HepG2 (cell line): ENCODE measurements at regions of chr2 and their contacts with region 1.

Region 1: DNA sequence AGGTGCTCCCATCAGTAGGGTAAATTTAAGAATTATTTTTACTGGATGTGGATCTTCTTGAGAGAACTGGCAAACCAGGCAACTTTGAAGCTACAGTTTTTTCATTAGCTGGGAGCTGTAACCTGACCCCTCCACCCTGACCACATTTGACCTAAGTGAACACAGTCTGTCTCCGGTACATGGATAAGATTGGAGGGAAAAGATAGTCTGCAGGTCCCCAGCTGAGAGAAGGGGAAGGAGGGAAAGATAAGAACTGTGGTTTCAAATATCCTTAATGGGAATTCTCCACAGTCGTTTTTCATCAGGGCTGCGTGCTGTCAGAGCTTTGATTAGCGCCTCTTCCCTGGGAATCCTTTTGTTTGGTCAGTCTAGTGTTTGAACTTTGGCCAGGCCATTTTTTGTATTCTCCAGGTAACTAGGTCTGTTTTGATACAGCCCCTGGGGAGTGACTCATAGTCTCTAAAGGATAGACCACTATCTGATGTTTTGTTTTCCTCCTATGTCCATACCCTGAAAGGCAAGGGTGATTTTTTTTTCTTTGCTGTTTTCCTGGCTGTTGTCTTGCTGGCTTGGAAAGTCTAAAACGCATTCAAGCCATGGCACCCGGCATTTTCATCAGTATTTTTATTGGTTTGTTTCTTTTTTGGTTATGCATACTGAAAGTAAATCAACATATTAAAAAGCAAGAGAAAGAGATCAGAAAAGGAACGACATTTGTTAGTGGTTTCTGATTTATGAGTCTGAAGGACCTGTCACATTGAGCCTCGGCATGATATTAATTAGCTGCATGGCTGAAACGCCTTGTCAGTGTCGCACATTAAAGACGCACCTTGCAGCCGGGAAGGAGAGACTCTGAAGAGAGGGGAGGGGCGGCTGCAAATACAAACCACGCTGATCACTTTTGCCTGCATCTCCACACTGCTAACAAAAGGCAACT is 183.4 kb upstream of the FN1 start:
- DNase-seq: peak; percentile 100
- ATAC-seq: peak; percentile 89
- H3K4me3 ChIP-seq: peak overlapping the region in 1 of 3 experiments; percentile 4; a peak in 1 of 6 replicates
- H3K27ac ChIP-seq: peak overlapping the region; percentile 90
- H3K4me1 ChIP-seq: peaks cover 91% of the 10 kb centered on the region
- H3K27me3 ChIP-seq: no peaks in the 10 kb centered on the region
- CTCF ChIP-seq: no peak
- EP300 ChIP-seq: peak; percentile 89 to 99
- POLR2A ChIP-seq: peak; percentile 19 to 61; a peak in 3 of 4 replicates
- RAD21 ChIP-seq: peak; percentile 24; the same call in 1 of the 2 replicates

Region 2: GRCh38 chr2:215418064-215418963 is 201.0 kb before region 1 on chr2:
- CTCF ChIA-PET with region 1: no interaction called
- POLR2A ChIA-PET with region 1: interaction called, 4 read pairs
- in situ Hi-C with region 1: no loop called
- intact Hi-C with region 1: loop called (anchors 5 kb)
- DNase-seq: peak; percentile 89
- ATAC-seq: peak; percentile 42
- H3K4me3 ChIP-seq: peak overlapping the region; percentile 3 to 31 (median 13); a peak in 2 of 6 replicates
- H3K27ac ChIP-seq: peak overlapping the region; percentile 77
- H3K4me1 ChIP-seq: peaks cover 100% of the 10 kb centered on the region
- H3K27me3 ChIP-seq: no peaks in the 10 kb centered on the region
- CTCF ChIP-seq: no peak
- EP300 ChIP-seq: peak; percentile 45 to 94; a peak in 3 of 4 replicates
- POLR2A ChIP-seq: peak in 1 of 2 experiments; percentile 28; a peak in 1 of 4 replicates
- RAD21 ChIP-seq: no peak

Region 3: DNA sequence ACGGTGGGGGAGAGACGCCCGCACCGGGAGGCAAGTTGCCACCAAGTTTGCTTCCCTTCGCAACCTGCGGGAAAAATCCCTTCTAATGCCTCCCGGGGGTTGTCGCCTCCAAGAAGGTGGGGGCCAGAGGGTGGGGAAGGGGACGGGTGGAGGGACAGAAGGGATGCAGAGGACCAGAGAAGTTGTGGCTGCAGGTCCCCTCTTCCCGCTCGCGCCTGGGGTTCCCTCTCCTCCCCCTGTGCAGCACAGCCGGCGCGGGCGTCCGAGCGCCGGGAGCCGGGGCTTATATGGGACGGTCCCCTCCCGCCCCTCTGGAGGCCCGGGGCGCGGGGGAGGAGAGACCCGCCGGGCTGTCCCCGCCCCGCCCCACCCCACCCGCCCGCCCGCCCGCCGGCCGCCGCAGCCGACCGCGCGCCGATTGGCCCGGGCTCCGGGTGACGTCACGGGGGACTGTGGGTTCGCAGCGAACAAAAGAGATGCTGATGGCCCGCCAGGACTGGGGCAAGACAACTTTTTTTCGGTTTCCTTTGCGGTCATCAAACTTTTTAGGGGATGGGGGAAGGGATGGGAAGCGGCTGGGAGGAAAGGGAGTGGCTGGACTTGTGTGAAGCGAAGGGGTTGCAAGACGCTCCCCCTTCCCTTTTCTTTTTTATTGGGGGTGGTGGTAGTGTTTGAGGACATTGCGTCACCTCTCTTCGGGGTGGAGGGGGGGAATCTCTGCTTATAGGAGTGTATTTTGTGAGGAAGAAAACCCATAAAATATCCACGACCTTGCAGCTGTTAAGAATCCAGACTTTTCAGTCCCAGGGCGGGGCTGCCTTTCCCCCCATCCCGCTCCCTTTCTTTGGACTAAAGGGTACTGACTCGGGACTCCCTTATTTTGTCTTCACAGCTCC is 183.2 kb before region 1 on chr2 and contains the start of gene FN1:
- CTCF ChIA-PET with region 1: no interaction called
- POLR2A ChIA-PET with region 1: interaction called, 4 read pairs
- in situ Hi-C with region 1: loop called (anchors 5 kb)
- intact Hi-C with region 1: loop called (anchors 2 kb)
- DNase-seq: peak; percentile 91
- ATAC-seq: peak; percentile 92
- H3K4me3 ChIP-seq: peak within 1 kb of the TSS; percentile 86 to 99 (median 95)
- H3K27ac ChIP-seq: peak within 1 kb of the TSS; percentile 71
- H3K4me1 ChIP-seq: peaks cover 71% of the 10 kb centered on the region
- H3K27me3 ChIP-seq: no peaks in the 10 kb centered on the region; a peak in 1 of 5 replicates
- CTCF ChIP-seq: no peak
- EP300 ChIP-seq: peak in 1 of 2 experiments; percentile 27; a peak in 1 of 4 replicates
- POLR2A ChIP-seq: peak; percentile 97 to 99
- RAD21 ChIP-seq: no peak; the same call in 1 of the 2 replicates
- total RNA-seq, gene FN1: 1,029 and 1,847 TPM in 2 replicates

Region 4: GRCh38 chr2:215505044-215505786 is 114.1 kb before region 1 on chr2:
- CTCF ChIA-PET with region 1: no interaction called
- POLR2A ChIA-PET with region 1: interaction called, 4 read pairs
- in situ Hi-C with region 1: no loop called
- intact Hi-C with region 1: loop called (anchors 1 kb)
- DNase-seq: peak; percentile 90
- ATAC-seq: peak; percentile 91
- H3K4me3 ChIP-seq: no peak overlapping the region
- H3K27ac ChIP-seq: peak overlapping the region; percentile 67
- H3K4me1 ChIP-seq: peaks cover 46% of the 10 kb centered on the region
- H3K27me3 ChIP-seq: no peaks in the 10 kb centered on the region
- CTCF ChIP-seq: no peak
- EP300 ChIP-seq: peak; percentile 47 to 92; a peak in 3 of 4 replicates
- POLR2A ChIP-seq: no peak
- RAD21 ChIP-seq: no peak

Region 5: GRCh38 chr2:215680605-215681598 is 61.6 kb after region 1 on chr2:
- CTCF ChIA-PET with region 1: no interaction called
- POLR2A ChIA-PET with region 1: interaction called, 13 read pairs
- in situ Hi-C with region 1: loop called (anchors 5 kb)
- intact Hi-C with region 1: loop called (anchors 1 kb)
- DNase-seq: peak; percentile 100
- ATAC-seq: peak; percentile 97
- H3K4me3 ChIP-seq: 0 out of 6 replicates have a peak overlapping the region, but pooled peaks of 1 of the 3 experiments have one; percentile 11
- H3K27ac ChIP-seq: peak overlapping the region; percentile 89
- H3K4me1 ChIP-seq: peaks cover 87% of the 10 kb centered on the region
- H3K27me3 ChIP-seq: no peaks in the 10 kb centered on the region
- CTCF ChIP-seq: no peak
- EP300 ChIP-seq: peak; percentile 98 to 100
- POLR2A ChIP-seq: no peak
- RAD21 ChIP-seq: no peak; the same call in none of the 2 replicates

Region 6: DNA sequence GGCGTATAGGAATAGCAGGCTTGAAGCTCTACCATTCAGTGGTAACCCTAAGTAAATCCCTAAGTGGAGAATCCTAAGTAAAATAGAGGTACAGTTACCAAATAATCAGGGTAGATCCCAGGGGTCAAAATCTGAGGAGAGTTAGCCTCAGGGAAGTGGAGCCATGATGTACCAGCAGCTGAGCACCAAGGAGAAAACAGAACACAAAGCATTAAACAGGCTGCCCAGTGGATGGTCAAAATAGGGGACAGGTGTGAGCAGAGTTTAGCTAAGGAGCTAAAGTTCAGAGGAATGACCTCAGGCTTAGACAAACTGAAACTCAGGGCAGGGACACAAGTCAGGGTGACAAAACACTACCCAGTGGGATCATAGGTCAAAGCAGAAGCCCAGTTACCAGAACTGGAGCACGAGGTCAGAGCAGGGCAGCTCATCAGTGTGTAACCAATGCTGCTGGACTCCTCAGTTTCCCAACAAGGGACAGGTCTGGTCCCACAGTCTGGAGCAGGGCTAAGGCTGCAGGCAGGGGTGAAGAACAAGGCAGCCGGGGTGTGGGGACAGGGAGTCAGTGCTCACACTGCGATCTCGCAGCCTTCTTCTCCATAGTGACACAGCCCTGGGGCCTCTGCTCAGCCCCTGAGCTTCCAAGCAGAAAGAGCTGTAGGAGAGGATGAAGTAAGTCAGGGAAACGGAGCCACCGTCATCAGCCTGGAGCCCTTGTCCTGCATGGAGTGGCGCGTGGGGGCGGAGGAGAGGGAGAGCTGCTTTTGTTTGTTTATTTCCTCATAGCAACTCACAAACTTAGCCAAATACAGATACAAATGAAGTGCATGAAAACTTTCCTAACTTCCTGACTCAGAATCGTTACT is 130.0 kb after region 1 on chr2:
- CTCF ChIA-PET with region 1: no interaction called
- POLR2A ChIA-PET with region 1: interaction called, 14 read pairs
- in situ Hi-C with region 1: no loop called
- intact Hi-C with region 1: no loop called
- DNase-seq: peak; percentile 91
- ATAC-seq: peak; percentile 92
- H3K4me3 ChIP-seq: no peak overlapping the region
- H3K27ac ChIP-seq: peak overlapping the region; percentile 79
- H3K4me1 ChIP-seq: peaks cover 86% of the 10 kb centered on the region
- H3K27me3 ChIP-seq: no peaks in the 10 kb centered on the region
- CTCF ChIP-seq: peak; percentile 25; the same call in 1 of the 2 replicates
- EP300 ChIP-seq: peak in 1 of 2 experiments; percentile 97; a peak in 2 of 4 replicates
- POLR2A ChIP-seq: peak; percentile 26 to 49; a peak in 2 of 4 replicates
- RAD21 ChIP-seq: 0 out of 2 replicates have a peak, but pooled peaks have one; percentile 37

Region 7: GRCh38 chr2:215920244-215921100 is 301.2 kb after region 1 on chr2:
- CTCF ChIA-PET with region 1: no interaction called
- POLR2A ChIA-PET with region 1: no interaction called
- in situ Hi-C with region 1: loop called (anchors 10 kb)
- intact Hi-C with region 1: loop called (anchors 2 kb)
- DNase-seq: peak; percentile 81
- ATAC-seq: peak; percentile 98
- H3K4me3 ChIP-seq: no peak overlapping the region
- H3K27ac ChIP-seq: peak overlapping the region; percentile 16
- H3K4me1 ChIP-seq: peaks cover 42% of the 10 kb centered on the region
- H3K27me3 ChIP-seq: no peaks in the 10 kb centered on the region
- CTCF ChIP-seq: peak; percentile 96
- EP300 ChIP-seq: peak in 1 of 2 experiments; percentile 43; a peak in 2 of 4 replicates
- POLR2A ChIP-seq: no peak
- RAD21 ChIP-seq: peak; percentile 96